ENCODE measurements at regions of chr6 and their contacts with region 1.

Region 1: GRCh38 chr6:79233611-79234149 is 802 bp downstream of the HMGN3 start:
- DNase-seq: peak; percentile 80
- H3K4me3 Mint-ChIP-seq: peak overlapping the region; percentile 88
- H3K27ac Mint-ChIP-seq: peak overlapping the region; percentile 79
- H3K4me1 Mint-ChIP-seq: peaks cover 15% of the 10 kb centered on the region
- H3K27me3 Mint-ChIP-seq: no peaks in the 10 kb centered on the region

Region 2: DNA sequence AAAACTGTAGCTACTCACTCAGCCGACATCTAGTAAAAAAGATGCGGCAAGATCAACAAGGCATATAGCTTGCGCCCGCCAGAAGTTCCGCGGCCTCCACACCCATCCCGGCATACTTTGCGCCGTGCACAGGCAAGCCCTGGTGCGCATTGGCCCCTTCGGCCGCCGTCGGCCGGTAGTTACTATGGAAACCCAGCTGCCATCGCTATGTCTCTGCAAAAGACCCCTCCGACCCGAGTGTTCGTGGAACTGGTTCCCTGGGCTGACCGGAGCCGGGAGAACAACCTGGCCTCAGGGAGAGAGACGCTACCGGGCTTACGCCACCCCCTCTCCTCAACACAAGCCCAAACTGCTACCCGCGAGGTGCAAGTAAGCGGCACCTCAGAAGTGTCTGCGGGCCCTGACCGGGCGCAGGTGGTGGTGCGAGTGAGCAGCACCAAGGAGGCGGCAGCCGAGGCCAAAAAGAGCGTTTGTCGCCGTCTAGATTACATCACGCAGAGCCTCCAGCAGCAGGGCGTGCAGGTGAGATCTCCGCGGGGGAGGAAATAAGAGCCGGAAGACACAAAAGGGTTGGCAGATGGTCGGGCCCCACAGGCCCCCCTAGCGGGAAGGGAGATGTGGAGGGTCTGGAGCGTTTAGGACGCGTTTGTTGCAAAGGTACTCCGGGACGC is 366.2 kb before region 1 on chr6 and contains the start of gene IRAK1BP1:
- CTCF ChIA-PET with region 1: no interaction called
- POLR2A ChIA-PET with region 1: no interaction called
- intact Hi-C with region 1: loop called (anchors 1 kb)
- DNase-seq: peak; percentile 90
- H3K4me3 Mint-ChIP-seq: peak within 1 kb of the TSS; percentile 97
- H3K27ac Mint-ChIP-seq: peak within 1 kb of the TSS; percentile 86
- H3K4me1 Mint-ChIP-seq: peaks cover 21% of the 10 kb centered on the region
- H3K27me3 Mint-ChIP-seq: no peaks in the 10 kb centered on the region
- total RNA-seq, gene IRAK1BP1: 2.1 to 2.4 TPM

Region 3: DNA sequence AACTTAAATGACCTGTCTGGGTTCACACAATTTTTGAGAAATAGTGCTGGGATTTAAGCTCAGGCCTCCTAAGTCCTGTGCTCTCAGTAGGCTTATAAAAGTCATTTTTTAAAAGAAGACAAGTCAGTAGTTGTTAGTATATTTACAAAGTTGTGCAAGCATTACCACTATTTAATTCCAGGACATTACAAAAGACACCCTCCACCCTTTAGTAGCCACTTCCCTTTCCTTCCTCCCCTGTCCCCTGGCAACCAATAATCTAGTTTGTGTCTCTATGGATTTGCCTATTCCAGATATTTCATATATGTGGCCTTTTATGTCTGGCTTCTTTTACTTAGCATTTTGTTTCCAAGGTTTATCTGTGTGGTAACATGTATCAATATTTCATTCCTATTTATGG is 36.8 kb before region 1 on chr6:
- CTCF ChIA-PET with region 1: no interaction called
- POLR2A ChIA-PET with region 1: no interaction called
- intact Hi-C with region 1: no loop called
- DNase-seq: no peak
- H3K4me3 Mint-ChIP-seq: no peak overlapping the region
- H3K27ac Mint-ChIP-seq: no peak overlapping the region
- H3K4me1 Mint-ChIP-seq: no peaks in the 10 kb centered on the region
- H3K27me3 Mint-ChIP-seq: no peaks in the 10 kb centered on the region

Region 4: GRCh38 chr6:79536954-79537747 is 303.5 kb after region 1 on chr6 and contains the start of gene LCA5:
- CTCF ChIA-PET with region 1: no interaction called
- POLR2A ChIA-PET with region 1: no interaction called
- intact Hi-C with region 1: loop called (anchors 2 kb)
- DNase-seq: peak; percentile 87
- H3K4me3 Mint-ChIP-seq: no peak within 1 kb of the TSS
- H3K27ac Mint-ChIP-seq: no peak within 1 kb of the TSS
- H3K4me1 Mint-ChIP-seq: no peaks in the 10 kb centered on the region
- H3K27me3 Mint-ChIP-seq: peaks cover 24% of the 10 kb centered on the region
- total RNA-seq, gene LCA5: 0.15 to 0.21 TPM

Region 5: DNA sequence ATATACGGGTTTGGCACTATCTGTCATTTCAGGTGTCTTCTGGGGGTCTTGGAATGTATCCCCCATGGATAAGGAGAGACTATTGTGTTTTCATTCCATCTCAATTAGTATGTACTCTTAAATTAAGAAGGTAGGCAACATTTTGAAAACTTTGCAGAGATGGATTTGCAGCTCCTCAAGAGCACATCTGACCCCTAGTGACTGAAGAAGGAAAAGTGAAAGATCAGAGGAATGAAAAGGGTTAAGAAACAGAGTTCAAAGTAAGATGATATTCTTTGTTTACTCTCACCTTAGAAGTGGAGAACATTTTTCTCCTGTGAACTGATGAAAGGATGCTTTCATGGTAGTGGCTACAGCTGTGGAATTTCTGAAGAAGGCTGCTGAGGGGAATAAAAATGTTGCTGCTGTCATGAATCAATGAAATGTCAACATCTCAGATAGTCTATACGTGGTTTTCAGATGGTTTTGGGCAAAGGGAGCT is 439.0 kb after region 1 on chr6:
- CTCF ChIA-PET with region 1: no interaction called
- POLR2A ChIA-PET with region 1: no interaction called
- intact Hi-C with region 1: loop called (anchors 5 kb)
- DNase-seq: no peak
- H3K4me3 Mint-ChIP-seq: no peak overlapping the region
- H3K27ac Mint-ChIP-seq: no peak overlapping the region
- H3K4me1 Mint-ChIP-seq: peaks cover 23% of the 10 kb centered on the region
- H3K27me3 Mint-ChIP-seq: no peaks in the 10 kb centered on the region

Region 6: GRCh38 chr6:80004173-80005072 is 770.7 kb after region 1 on chr6 and contains the start of gene TTK:
- CTCF ChIA-PET with region 1: no interaction called
- POLR2A ChIA-PET with region 1: no interaction called
- intact Hi-C with region 1: loop called (anchors 2 kb)
- DNase-seq: peak; percentile 94
- H3K4me3 Mint-ChIP-seq: peak within 1 kb of the TSS; percentile 94
- H3K27ac Mint-ChIP-seq: peak within 1 kb of the TSS; percentile 86
- H3K4me1 Mint-ChIP-seq: peaks cover 28% of the 10 kb centered on the region
- H3K27me3 Mint-ChIP-seq: peaks cover 3% of the 10 kb centered on the region
- total RNA-seq, gene TTK: 37.2 to 39.4 TPM

Region 7: DNA sequence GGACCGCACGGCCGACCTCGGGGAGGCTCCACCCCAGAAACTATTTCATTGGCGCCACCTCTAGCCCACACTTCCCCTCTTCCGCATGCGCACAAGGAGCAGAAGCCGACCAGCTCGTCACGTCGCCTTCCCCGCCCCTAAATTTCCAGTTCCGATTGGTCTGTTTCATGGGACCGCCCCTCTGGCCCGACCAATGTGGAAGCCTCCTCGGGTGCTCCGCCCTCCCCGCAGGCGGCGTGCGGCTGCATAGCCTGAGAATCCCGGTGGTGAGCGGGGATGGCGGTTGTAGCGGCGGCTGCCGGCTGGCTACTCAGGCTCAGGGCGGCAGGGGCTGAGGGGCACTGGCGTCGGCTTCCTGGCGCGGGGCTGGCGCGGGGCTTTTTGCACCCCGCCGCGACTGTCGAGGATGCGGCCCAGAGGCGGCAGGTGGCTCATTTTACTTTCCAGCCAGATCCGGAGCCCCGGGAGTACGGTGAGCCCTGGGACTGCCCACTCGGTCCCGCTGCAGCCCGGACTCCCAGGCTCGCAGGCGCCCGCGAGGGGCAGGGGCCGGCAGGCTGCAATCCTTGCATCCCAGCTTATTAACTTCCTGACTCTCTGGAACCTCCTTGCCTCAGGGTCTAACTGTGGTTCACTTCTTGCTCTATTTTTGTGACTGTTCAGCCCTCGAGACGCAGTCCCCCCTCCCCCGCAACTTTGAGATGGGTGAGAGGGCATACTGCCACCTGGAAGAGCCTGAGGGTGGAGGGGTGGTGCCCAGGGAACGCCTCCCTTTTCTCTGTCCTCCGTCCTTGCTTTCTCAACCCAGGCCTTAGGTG is 872.9 kb after region 1 on chr6 and contains the start of gene BCKDHB:
- CTCF ChIA-PET with region 1: no interaction called
- POLR2A ChIA-PET with region 1: no interaction called
- intact Hi-C with region 1: loop called (anchors 10 kb)
- DNase-seq: peak; percentile 99
- H3K4me3 Mint-ChIP-seq: peak within 1 kb of the TSS; percentile 94
- H3K27ac Mint-ChIP-seq: peak within 1 kb of the TSS; percentile 80
- H3K4me1 Mint-ChIP-seq: peaks cover 15% of the 10 kb centered on the region
- H3K27me3 Mint-ChIP-seq: no peaks in the 10 kb centered on the region
- total RNA-seq, gene BCKDHB: 16.4 to 17.7 TPM